Astrocyte of the cerebellum (primary cell): ENCODE measurements at regions of chr14 and their contacts with region 1.

Region 1: GRCh38 chr14:100581228-100582145 is 5.7 kb downstream of the BEGAIN start:
- DNase-seq: no peak
- H3K4me3 ChIP-seq: no peak overlapping the region
- CTCF ChIP-seq: no peak

Region 2: GRCh38 chr14:100638211-100638855 is 56.8 kb after region 1 on chr14:
- in situ Hi-C with region 1: loop called (anchors 5 kb)
- DNase-seq: no peak
- H3K4me3 ChIP-seq: no peak overlapping the region
- CTCF ChIP-seq: no peak

Region 3: DNA sequence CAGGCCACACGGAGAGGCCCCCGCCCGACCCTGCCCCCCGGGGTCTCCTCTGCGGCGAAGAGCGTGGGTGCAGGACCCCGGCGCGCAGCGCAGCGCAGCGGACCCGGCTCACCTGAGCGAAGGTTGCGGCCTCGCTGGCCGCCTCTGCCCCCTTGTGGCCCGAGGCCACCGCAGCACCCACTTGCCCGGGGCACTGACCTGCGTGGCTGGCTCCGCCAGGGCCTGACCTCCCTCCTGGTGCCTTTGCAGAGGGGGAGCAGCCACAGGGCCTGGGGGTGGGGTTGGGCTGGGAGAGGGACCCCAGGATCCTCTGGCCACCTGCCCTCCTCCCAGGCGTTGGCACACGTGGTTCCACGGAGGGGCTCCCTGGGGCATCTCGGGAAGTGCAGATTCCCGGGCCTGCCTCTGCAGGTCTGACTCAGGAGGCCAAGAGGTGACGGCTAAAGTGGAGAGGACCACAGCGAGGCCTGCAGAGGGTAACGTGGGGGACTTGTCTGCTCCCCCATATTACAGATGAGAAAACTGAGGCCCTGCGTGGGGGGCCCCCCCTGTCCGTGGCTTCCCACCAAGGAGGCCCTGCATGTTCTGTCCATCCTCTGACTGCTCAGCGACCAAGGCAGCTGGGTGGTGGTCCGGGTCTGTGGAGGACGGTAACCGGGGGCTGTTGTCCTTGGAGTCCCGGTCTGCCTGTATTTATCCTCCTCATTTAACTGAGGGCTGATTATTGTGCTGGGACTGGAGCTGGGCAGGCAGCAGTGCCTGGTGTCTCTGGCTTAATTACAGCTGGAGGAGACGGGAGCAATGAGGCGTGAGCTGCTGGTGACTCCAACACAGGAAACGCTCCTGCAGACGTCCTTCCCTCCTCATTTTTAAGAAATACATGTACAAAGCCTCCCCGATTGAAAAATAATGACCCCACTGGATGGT is 73.6 kb after region 1 on chr14:
- in situ Hi-C with region 1: no loop called
- DNase-seq: no peak
- H3K4me3 ChIP-seq: no peak overlapping the region
- CTCF ChIP-seq: peak; percentile 61